ENCODE measurements at regions of chr4 and their contacts with region 1.

Region 1: GRCh38 chr4:122922877-122923511 is 597 bp upstream of the NUDT6 start:
- DNase-seq: peak; percentile 94
- H3K4me3 Mint-ChIP-seq: peak overlapping the region; percentile 94
- H3K27ac Mint-ChIP-seq: peak overlapping the region; percentile 90
- H3K4me1 Mint-ChIP-seq: peaks cover 11% of the 10 kb centered on the region
- H3K27me3 Mint-ChIP-seq: no peaks in the 10 kb centered on the region

Region 2: DNA sequence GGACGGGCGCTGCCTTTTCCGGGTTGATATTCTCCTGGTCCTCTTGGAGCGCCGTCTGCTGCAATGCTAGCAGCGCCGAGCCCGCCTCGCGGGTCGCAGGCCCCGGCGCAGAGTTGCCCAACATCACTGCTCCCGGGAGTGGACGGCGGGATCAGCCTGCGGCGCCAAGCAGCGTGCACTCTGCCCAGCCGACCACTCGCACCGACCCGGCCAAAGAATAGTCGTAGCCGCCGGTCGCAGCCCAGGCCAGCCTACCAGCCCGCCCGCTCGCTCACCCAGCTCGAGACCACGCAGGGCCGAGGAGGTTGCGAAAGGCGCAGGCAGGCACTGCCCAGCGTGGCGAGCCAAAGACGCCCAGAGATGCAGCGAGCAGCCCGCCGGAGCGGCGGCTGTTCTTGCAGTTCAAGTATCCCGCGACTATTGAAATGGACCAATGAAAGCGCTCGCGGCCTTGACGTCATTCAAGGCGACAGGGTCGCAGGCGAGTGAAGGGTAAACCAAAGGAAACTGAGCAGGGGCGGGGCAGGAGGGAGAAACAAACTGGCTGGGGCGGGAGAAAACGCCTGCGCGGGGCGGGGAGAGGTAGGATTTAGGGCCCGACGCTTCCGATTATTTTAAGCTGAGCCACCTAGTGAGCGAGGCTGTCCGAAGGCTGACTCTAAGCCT is 1099.4 kb before region 1 on chr4 and contains the start of gene CCNA2:
- CTCF ChIA-PET with region 1: no interaction called
- POLR2A ChIA-PET with region 1: no interaction called
- intact Hi-C with region 1: loop called (anchors 5 kb)
- DNase-seq: peak; percentile 99
- H3K4me3 Mint-ChIP-seq: peak within 1 kb of the TSS; percentile 97
- H3K27ac Mint-ChIP-seq: peak within 1 kb of the TSS; percentile 81
- H3K4me1 Mint-ChIP-seq: peaks cover 25% of the 10 kb centered on the region
- H3K27me3 Mint-ChIP-seq: no peaks in the 10 kb centered on the region
- total RNA-seq, gene CCNA2: 98.2 to 100 TPM

Region 3: GRCh38 chr4:122584519-122584918 is 338.5 kb before region 1 on chr4:
- CTCF ChIA-PET with region 1: interaction called, 3 read pairs
- POLR2A ChIA-PET with region 1: no interaction called
- intact Hi-C with region 1: loop called (anchors 5 kb)
- DNase-seq: peak; percentile 23
- H3K4me3 Mint-ChIP-seq: peak overlapping the region; percentile 21
- H3K27ac Mint-ChIP-seq: peak overlapping the region; percentile 88
- H3K4me1 Mint-ChIP-seq: peaks cover 46% of the 10 kb centered on the region
- H3K27me3 Mint-ChIP-seq: no peaks in the 10 kb centered on the region

Region 4: GRCh38 chr4:122658818-122659295 is 264.1 kb before region 1 on chr4:
- CTCF ChIA-PET with region 1: no interaction called
- POLR2A ChIA-PET with region 1: no interaction called
- intact Hi-C with region 1: loop called (anchors 5 kb)
- DNase-seq: no peak
- H3K4me3 Mint-ChIP-seq: no peak overlapping the region
- H3K27ac Mint-ChIP-seq: peak overlapping the region; percentile 98
- H3K4me1 Mint-ChIP-seq: peaks cover 60% of the 10 kb centered on the region
- H3K27me3 Mint-ChIP-seq: no peaks in the 10 kb centered on the region

Region 5: DNA sequence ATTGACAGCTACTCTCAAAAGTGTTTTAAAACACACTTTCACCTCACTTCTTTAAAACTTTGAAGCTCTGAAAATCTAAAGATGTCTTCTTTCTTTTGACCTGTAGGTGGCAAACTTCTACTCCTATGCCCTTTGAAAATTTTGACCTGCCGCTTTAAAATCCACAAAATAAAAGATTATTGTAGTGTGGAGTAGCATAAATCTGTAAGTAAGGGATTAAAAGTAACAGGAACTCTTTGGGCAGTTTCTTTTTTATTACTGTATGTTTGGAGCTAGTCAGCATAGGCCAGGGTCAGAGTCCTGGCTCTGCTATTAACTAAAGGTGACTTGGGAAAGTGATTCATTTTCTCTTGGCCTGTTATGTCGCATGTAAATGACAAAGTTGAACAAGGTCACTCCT is 165.0 kb before region 1 on chr4:
- CTCF ChIA-PET with region 1: interaction called, 49 read pairs
- POLR2A ChIA-PET with region 1: no interaction called
- intact Hi-C with region 1: loop called (anchors 2 kb)
- DNase-seq: no peak
- H3K4me3 Mint-ChIP-seq: no peak overlapping the region
- H3K27ac Mint-ChIP-seq: no peak overlapping the region
- H3K4me1 Mint-ChIP-seq: peaks cover 10% of the 10 kb centered on the region
- H3K27me3 Mint-ChIP-seq: peaks cover 5% of the 10 kb centered on the region

Measured in activated CD4-positive, alpha-beta memory T cell treated with anti-CD3 and anti-CD28 coated beads for 36 hours (primary cell).